Left lung (tissue), 14 donors: ENCODE measurements at regions of chr9 and their contacts with region 1.

Region 1: DNA sequence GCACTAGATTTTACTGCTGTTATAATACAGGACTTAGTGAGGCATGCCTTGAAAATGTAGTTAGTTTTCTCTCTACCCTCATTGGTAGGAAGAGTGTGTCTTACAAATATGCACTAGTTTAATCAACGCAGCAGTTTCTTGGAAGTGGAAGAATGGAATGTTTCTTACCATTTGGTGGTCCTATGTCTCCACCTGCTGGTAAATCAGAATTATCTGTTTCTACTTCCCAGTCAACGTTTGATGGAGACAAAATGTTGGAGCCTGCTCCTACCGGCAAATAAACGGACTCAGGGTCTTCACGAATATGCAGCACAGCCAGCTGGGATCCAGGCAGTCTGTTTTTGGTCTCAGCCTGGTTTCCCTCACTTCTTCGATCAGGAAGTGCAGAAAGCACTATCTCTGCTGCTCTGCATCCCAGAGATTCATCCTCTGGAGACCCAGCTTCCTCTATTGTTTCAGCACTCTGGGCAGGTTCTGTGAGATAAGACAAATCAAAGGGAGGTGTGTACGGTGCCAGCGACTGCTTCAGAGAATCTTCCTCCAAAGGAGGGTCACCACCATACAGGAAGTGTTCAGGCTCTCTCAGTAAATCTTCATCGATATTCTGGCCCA is 59.5 kb upstream of the PCA3 start:
- DNase-seq: peak in 2 of 4 donors; percentile 69 to 87
- ATAC-seq: peak; percentile 86
- H3K4me3 ChIP-seq: no peak overlapping the region
- H3K27ac ChIP-seq: no peak overlapping the region
- H3K4me1 ChIP-seq: peaks cover 0 to 17% of the 10 kb centered on the region in 2 donors
- H3K27me3 ChIP-seq: peaks cover 0 to 9% of the 10 kb centered on the region in 2 donors
- CTCF ChIP-seq: peak; percentile 57 to 76

Region 2: GRCh38 chr9:76438841-76439588 is 265.7 kb before region 1 on chr9:
- intact Hi-C with region 1: loop called in 1 of 2 experiments (anchors 10 kb)
- DNase-seq: no peak
- ATAC-seq: no peak
- H3K4me3 ChIP-seq: no peak overlapping the region
- H3K27ac ChIP-seq: no peak overlapping the region
- H3K4me1 ChIP-seq: no peaks in the 10 kb centered on the region
- H3K27me3 ChIP-seq: no peaks in the 10 kb centered on the region
- CTCF ChIP-seq: no peak

Region 3: DNA sequence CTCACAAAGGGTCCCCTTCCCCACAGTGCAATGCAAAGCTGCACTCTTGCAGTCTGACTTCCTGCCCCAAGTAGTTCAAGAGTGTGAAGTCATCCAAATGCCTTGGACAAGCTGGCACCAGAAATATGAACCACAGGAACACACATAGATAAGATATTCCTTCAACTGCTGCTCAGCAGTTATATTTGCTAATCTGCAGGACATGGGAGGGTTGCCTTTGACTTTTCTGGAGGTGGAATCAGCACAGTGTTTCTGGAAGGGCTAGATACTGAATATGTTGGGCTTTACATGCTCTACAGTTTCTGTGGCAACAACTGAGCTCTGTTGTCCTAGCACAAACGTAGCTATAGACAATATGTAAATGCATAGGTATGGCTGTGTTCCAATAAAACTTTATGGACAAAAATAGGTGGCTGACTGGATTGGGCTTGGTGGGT is 37.2 kb before region 1 on chr9:
- intact Hi-C with region 1: loop called in 1 of 2 experiments (anchors 5 kb)
- DNase-seq: peak in 1 of 4 donors; percentile 33
- ATAC-seq: peak; percentile 69
- H3K4me3 ChIP-seq: no peak overlapping the region
- H3K27ac ChIP-seq: no peak overlapping the region
- H3K4me1 ChIP-seq: peaks cover 0 to 11% of the 10 kb centered on the region in 2 donors
- H3K27me3 ChIP-seq: no peaks in the 10 kb centered on the region
- CTCF ChIP-seq: no peak

Region 4: GRCh38 chr9:76932757-76933156 is 228.1 kb after region 1 on chr9:
- intact Hi-C with region 1: no loop called
- DNase-seq: no peak
- ATAC-seq: no peak
- H3K4me3 ChIP-seq: no peak overlapping the region
- H3K27ac ChIP-seq: no peak overlapping the region
- H3K4me1 ChIP-seq: no peaks in the 10 kb centered on the region
- H3K27me3 ChIP-seq: no peaks in the 10 kb centered on the region
- CTCF ChIP-seq: no peak